GM12878 (cell line): ENCODE measurements at regions of chr6 and their contacts with region 1.

Region 1: GRCh38 chr6:90940812-90941481 is 354.1 kb upstream of the MAP3K7 start:
- DNase-seq: peak; percentile 80
- ATAC-seq: peak; percentile 93
- H3K4me3 ChIP-seq: no peak overlapping the region
- H3K27ac ChIP-seq: no peak overlapping the region
- H3K4me1 ChIP-seq: peaks cover 3% of the 10 kb centered on the region; the same call in 1 of the 2 replicates
- H3K27me3 ChIP-seq: no peaks in the 10 kb centered on the region
- CTCF ChIP-seq: peak; percentile 34 to 76 (median 58); a peak in 5 of 6 replicates
- EP300 ChIP-seq: no peak
- POLR2A ChIP-seq: no peak
- RAD21 ChIP-seq: peak; percentile 77

Region 2: GRCh38 chr6:90928051-90928450 is 12.9 kb before region 1 on chr6:
- CTCF ChIA-PET with region 1: interaction called, 25 read pairs
- POLR2A ChIA-PET with region 1: no interaction called
- RAD21 ChIA-PET with region 1: interaction called, 7 read pairs
- SMC1A ChIA-PET with region 1: interaction called, 7 read pairs
- in situ Hi-C with region 1: no loop called
- intact Hi-C with region 1: no loop called
- DNase-seq: no peak
- ATAC-seq: no peak
- H3K4me3 ChIP-seq: no peak overlapping the region
- H3K27ac ChIP-seq: no peak overlapping the region
- H3K4me1 ChIP-seq: no peaks in the 10 kb centered on the region
- H3K27me3 ChIP-seq: no peaks in the 10 kb centered on the region
- CTCF ChIP-seq: no peak
- EP300 ChIP-seq: no peak
- POLR2A ChIP-seq: no peak
- RAD21 ChIP-seq: no peak

Region 3: GRCh38 chr6:90982051-90982450 is 41.1 kb after region 1 on chr6:
- CTCF ChIA-PET with region 1: interaction called, 12 read pairs
- POLR2A ChIA-PET with region 1: interaction called, 8 read pairs
- RAD21 ChIA-PET with region 1: no interaction called
- SMC1A ChIA-PET with region 1: interaction called, 5 read pairs
- in situ Hi-C with region 1: no loop called
- intact Hi-C with region 1: no loop called
- DNase-seq: no peak
- ATAC-seq: peak; percentile 78
- H3K4me3 ChIP-seq: no peak overlapping the region
- H3K27ac ChIP-seq: no peak overlapping the region
- H3K4me1 ChIP-seq: no peaks in the 10 kb centered on the region
- H3K27me3 ChIP-seq: no peaks in the 10 kb centered on the region
- CTCF ChIP-seq: no peak
- EP300 ChIP-seq: no peak
- POLR2A ChIP-seq: no peak
- RAD21 ChIP-seq: no peak

Region 4: GRCh38 chr6:91081452-91082067 is 140.6 kb after region 1 on chr6:
- CTCF ChIA-PET with region 1: interaction called, 37 read pairs
- POLR2A ChIA-PET with region 1: no interaction called
- RAD21 ChIA-PET with region 1: interaction called, 34 read pairs
- SMC1A ChIA-PET with region 1: interaction called, 25 read pairs
- in situ Hi-C with region 1: no loop called
- intact Hi-C with region 1: loop called (anchors 1 kb)
- DNase-seq: no peak
- ATAC-seq: peak; percentile 82
- H3K4me3 ChIP-seq: no peak overlapping the region
- H3K27ac ChIP-seq: no peak overlapping the region
- H3K4me1 ChIP-seq: no peaks in the 10 kb centered on the region
- H3K27me3 ChIP-seq: no peaks in the 10 kb centered on the region
- CTCF ChIP-seq: peak; percentile 52 to 73 (median 65)
- EP300 ChIP-seq: no peak
- POLR2A ChIP-seq: no peak
- RAD21 ChIP-seq: peak; percentile 76

Region 5: GRCh38 chr6:91106083-91106482 is 165.1 kb after region 1 on chr6:
- CTCF ChIA-PET with region 1: no interaction called
- POLR2A ChIA-PET with region 1: no interaction called
- RAD21 ChIA-PET with region 1: no interaction called
- SMC1A ChIA-PET with region 1: no interaction called
- in situ Hi-C with region 1: no loop called
- intact Hi-C with region 1: no loop called
- DNase-seq: no peak
- ATAC-seq: no peak
- H3K4me3 ChIP-seq: no peak overlapping the region
- H3K27ac ChIP-seq: no peak overlapping the region
- H3K4me1 ChIP-seq: no peaks in the 10 kb centered on the region
- H3K27me3 ChIP-seq: no peaks in the 10 kb centered on the region; a peak in 1 of 4 replicates
- CTCF ChIP-seq: no peak
- EP300 ChIP-seq: no peak
- POLR2A ChIP-seq: no peak
- RAD21 ChIP-seq: no peak

Region 6: DNA sequence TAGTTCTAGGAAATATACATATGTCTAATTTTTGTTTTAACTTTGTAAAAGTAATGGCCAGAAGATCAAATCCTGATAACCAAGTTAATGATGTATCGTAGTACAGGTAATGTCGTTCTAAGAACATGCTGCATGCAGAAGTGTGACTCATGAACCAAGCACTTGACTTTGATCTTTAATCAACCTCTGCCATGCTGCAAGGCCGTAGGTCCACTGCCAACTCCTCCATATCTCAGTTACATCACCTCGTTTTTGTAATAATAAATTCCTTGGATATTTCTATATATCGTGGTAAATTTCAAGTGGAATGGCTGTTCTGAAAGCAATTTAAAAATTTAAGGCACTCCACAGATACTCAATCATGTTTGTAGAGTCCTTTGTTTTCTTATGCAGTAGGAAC is 1706.7 kb after region 1 on chr6:
- CTCF ChIA-PET with region 1: interaction called, 15 read pairs
- POLR2A ChIA-PET with region 1: no interaction called
- RAD21 ChIA-PET with region 1: interaction called, 3 read pairs
- SMC1A ChIA-PET with region 1: no interaction called
- in situ Hi-C with region 1: no loop called
- intact Hi-C with region 1: no loop called
- DNase-seq: no peak
- ATAC-seq: no peak
- H3K4me3 ChIP-seq: no peak overlapping the region
- H3K27ac ChIP-seq: no peak overlapping the region
- H3K4me1 ChIP-seq: no peaks in the 10 kb centered on the region
- H3K27me3 ChIP-seq: no peaks in the 10 kb centered on the region
- CTCF ChIP-seq: no peak
- EP300 ChIP-seq: no peak
- POLR2A ChIP-seq: no peak
- RAD21 ChIP-seq: no peak